ENCODE measurements at regions of chr1 and their contacts with region 1.

Region 1: DNA sequence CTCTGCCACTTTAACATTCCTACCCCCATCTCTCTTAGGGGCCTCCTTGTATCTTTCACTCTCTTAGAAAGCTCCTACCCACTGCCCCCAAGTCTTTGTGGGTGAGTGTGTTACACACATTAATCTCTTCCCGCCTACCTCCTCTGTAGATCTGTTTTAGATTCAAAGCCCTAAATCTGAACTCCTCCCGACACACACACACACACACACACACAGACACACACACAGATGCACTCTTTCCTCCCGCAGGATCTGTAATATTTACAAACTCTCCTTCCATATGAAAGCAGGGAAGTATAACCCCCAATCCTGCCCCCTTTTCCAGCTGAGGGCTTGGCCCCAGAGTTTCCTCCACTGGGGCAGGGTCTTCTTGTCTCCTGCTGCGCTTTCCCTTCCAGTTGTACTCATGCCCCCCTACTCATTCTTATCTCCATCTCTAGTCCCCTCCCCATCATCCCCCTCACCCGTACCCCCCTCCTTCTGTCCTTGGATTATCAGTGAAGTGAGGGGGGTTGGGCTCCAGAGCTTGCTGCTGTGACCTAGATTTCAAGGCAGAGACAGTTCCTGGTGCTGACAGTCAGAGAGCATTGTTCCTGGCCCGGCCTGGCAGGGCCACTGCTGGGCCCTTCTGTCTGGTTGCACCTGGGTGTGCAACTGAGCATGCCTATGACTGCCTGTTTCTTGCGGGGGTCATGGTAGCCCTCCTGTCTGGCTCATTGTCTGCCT is 4.3 kb downstream of the PEA15 start:
- DNase-seq: no peak
- ATAC-seq: no peak
- H3K4me3 ChIP-seq: no peak overlapping the region
- H3K4me3 Mint-ChIP-seq: no peak overlapping the region
- H3K27ac ChIP-seq: no peak overlapping the region
- H3K27ac Mint-ChIP-seq: peak overlapping the region; percentile 64 to 70
- H3K4me1 ChIP-seq: peaks cover 2 to 22% of the 10 kb centered on the region in 2 experiments
- H3K4me1 Mint-ChIP-seq: peaks cover 34 to 36% (median 36%) of the 10 kb centered on the region in 3 donors
- H3K27me3 ChIP-seq: no peaks in the 10 kb centered on the region
- H3K27me3 Mint-ChIP-seq: no peaks in the 10 kb centered on the region

Region 2: GRCh38 chr1:160098852-160099561 is 110.5 kb before region 1 on chr1:
- CTCF ChIA-PET with region 1: no interaction called
- POLR2A ChIA-PET with region 1: no interaction called
- DNase-seq: peak; percentile 93 to 99 (median 98)
- ATAC-seq: peak; percentile 86 to 91 (median 88)
- H3K4me3 ChIP-seq: peak overlapping the region; percentile 60 to 65
- H3K4me3 Mint-ChIP-seq: peak overlapping the region; percentile 68 to 91 (median 78)
- H3K27ac ChIP-seq: peak overlapping the region; percentile 99
- H3K27ac Mint-ChIP-seq: peak overlapping the region; percentile 94 to 98
- H3K4me1 ChIP-seq: peaks cover 12 to 66% of the 10 kb centered on the region in 2 experiments
- H3K4me1 Mint-ChIP-seq: peaks cover 62 to 64% (median 62%) of the 10 kb centered on the region in 3 donors
- H3K27me3 ChIP-seq: peaks cover 0 to 2% of the 10 kb centered on the region in 2 experiments
- H3K27me3 Mint-ChIP-seq: no peaks in the 10 kb centered on the region

Region 3: DNA sequence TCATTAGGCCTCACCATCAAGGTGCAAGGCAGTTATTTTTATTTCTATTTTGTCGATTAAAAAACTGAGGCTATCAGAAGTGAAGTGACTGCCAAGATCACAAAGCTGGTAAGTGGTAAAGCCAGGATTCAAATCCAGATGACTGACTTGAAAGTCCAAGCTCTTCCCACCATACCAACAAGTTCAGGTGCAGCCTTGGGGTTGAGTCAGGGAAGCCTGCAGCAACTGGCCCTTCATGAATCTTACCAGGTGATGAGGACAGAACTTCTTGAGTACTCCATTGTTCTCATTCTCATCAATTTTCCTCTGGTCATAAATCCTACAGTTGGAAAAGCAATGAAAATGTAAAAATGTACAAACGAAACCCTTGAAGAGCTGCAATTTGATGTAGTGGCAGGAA is 15.9 kb after region 1 on chr1:
- CTCF ChIA-PET with region 1: interaction called in 1 of 2 experiments, 3 read pairs
- POLR2A ChIA-PET with region 1: interaction called in 1 of 2 experiments, 13 read pairs
- DNase-seq: no peak
- ATAC-seq: no peak
- H3K4me3 ChIP-seq: no peak overlapping the region
- H3K4me3 Mint-ChIP-seq: no peak overlapping the region
- H3K27ac ChIP-seq: no peak overlapping the region
- H3K27ac Mint-ChIP-seq: no peak overlapping the region
- H3K4me1 ChIP-seq: no peaks in the 10 kb centered on the region
- H3K4me1 Mint-ChIP-seq: no peaks in the 10 kb centered on the region
- H3K27me3 ChIP-seq: no peaks in the 10 kb centered on the region
- H3K27me3 Mint-ChIP-seq: no peaks in the 10 kb centered on the region

Measured in T-cell (primary cell).